Esophagus muscularis mucosa (tissue), 4 donors: ENCODE measurements at regions of chr4 and their contacts with region 1.

Region 1: DNA sequence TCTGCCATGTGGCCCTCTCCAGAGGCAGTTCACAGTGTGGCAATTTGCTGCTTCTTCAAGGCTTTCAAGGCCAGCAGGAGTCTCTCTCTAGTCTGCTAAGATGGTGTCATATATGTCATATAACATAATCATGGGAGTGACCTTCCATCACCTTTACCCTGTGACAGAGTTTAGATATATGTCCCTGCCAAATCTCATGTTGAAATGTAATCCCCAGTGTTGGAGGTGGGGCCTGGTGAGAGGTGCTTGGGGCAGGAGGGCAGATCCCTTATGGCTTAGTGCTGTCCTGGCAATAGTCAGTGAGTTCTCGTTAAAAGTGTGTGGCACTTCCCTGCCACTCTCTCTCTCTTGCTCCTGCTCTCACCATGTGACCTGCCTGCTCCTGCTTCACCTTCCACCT is 252.0 kb downstream of the PALLD start:
- DNase-seq: no peak
- H3K4me3 ChIP-seq: no peak overlapping the region
- H3K27ac ChIP-seq: no peak overlapping the region
- H3K4me1 ChIP-seq: peaks cover 2 to 11% (median 8%) of the 10 kb centered on the region in 4 donors
- H3K27me3 ChIP-seq: no peaks in the 10 kb centered on the region
- CTCF ChIP-seq: no peak
- EP300 ChIP-seq: no peak
- POLR2A ChIP-seq: no peak

Region 2: GRCh38 chr4:168784786-168785461 is 36.1 kb after region 1 on chr4:
- intact Hi-C with region 1: loop called (anchors 5 kb)
- DNase-seq: no peak
- H3K4me3 ChIP-seq: no peak overlapping the region
- H3K27ac ChIP-seq: no peak overlapping the region
- H3K4me1 ChIP-seq: peaks cover 0 to 18% (median 4%) of the 10 kb centered on the region in 4 donors
- H3K27me3 ChIP-seq: no peaks in the 10 kb centered on the region
- CTCF ChIP-seq: no peak
- EP300 ChIP-seq: no peak
- POLR2A ChIP-seq: no peak